ENCODE measurements at regions of chr16 and their contacts with region 1.

Region 1: DNA sequence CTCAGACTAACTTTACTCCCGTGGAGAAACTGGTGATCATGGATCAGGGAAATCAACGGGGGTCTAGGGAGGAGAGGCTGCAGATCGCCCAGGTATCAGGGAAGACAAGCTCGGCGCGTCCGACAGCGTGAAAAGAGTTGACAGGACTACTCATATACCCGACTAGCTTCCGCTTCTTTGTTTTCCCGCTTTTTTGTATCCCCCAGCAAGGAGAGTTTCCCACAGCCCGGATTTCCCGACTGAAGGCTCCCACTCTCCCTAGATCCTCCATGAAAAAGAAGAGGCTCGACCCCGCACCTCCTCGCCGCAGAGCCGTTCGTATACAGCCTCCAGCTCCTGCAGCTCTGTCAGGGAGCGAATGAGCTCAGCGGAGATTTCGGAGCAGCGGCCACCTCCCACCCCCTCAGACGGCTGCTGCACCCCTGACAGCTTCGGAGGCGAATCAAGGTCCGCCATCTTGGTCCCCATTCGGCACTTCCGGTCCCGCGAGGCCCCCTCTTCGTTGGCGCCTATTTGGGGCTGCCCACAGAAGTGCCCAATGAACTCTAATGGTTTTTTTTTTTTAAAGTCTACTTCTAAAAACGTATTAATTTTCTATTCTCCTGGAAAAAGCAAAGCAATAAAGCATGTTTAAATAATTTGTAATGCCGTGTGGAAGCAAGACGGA is at the start of gene COG4:
- DNase-seq: peak; percentile 80
- ATAC-seq: peak; percentile 85
- H3K4me3 Mint-ChIP-seq: peak within 1 kb of the TSS; percentile 99
- H3K27ac Mint-ChIP-seq: peak within 1 kb of the TSS; percentile 99
- H3K4me1 Mint-ChIP-seq: peaks cover 53% of the 10 kb centered on the region
- H3K27me3 Mint-ChIP-seq: no peaks in the 10 kb centered on the region
- CTCF ChIP-seq: no peak
- total RNA-seq, gene COG4: 39.8 and 42.5 TPM in 2 replicates

Region 2: GRCh38 chr16:70251629-70252354 is 271.4 kb before region 1 on chr16 and contains the start of gene EXOSC6:
- CTCF ChIA-PET with region 1: no interaction called
- POLR2A ChIA-PET with region 1: interaction called, 5 read pairs
- intact Hi-C with region 1: loop called (anchors 1 kb)
- DNase-seq: peak; percentile 87
- ATAC-seq: peak; percentile 96
- H3K4me3 Mint-ChIP-seq: peak within 1 kb of the TSS; percentile 89
- H3K27ac Mint-ChIP-seq: peak within 1 kb of the TSS; percentile 94
- H3K4me1 Mint-ChIP-seq: peaks cover 24% of the 10 kb centered on the region
- H3K27me3 Mint-ChIP-seq: no peaks in the 10 kb centered on the region
- CTCF ChIP-seq: peak; percentile 88
- total RNA-seq, gene EXOSC6: 30.5 and 32.0 TPM in 2 replicates

Region 3: DNA sequence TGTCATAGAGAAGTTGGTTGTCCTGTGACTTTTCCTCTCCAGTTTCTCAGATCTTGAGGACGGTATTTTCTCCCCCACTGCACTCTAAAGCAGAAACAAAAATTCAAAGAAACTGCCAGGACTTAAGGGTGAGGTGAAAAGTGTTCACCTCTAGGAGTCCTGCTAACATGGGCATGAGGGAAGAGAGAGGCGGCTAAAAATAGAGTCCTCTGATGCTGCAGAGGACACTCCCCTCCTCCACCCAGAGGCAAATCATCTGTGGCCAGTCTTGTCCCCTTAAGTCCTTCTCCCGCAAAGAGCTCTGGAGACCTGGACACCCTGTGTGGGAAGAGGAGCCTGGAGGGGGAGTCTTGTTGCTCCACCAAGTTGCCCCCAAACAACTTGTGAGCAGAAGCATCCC is 181.2 kb before region 1 on chr16:
- CTCF ChIA-PET with region 1: no interaction called
- POLR2A ChIA-PET with region 1: interaction called, 14 read pairs
- intact Hi-C with region 1: loop called (anchors 1 kb)
- DNase-seq: no peak
- ATAC-seq: no peak
- H3K4me3 Mint-ChIP-seq: no peak overlapping the region
- H3K27ac Mint-ChIP-seq: no peak overlapping the region
- H3K4me1 Mint-ChIP-seq: peaks cover 9% of the 10 kb centered on the region
- H3K27me3 Mint-ChIP-seq: no peaks in the 10 kb centered on the region
- CTCF ChIP-seq: no peak

Region 4: GRCh38 chr16:70395345-70395901 is 127.8 kb before region 1 on chr16:
- CTCF ChIA-PET with region 1: no interaction called
- POLR2A ChIA-PET with region 1: interaction called, 3 read pairs
- intact Hi-C with region 1: loop called (anchors 1 kb)
- DNase-seq: peak; percentile 66
- ATAC-seq: peak; percentile 89
- H3K4me3 Mint-ChIP-seq: no peak overlapping the region
- H3K27ac Mint-ChIP-seq: no peak overlapping the region
- H3K4me1 Mint-ChIP-seq: peaks cover 5% of the 10 kb centered on the region
- H3K27me3 Mint-ChIP-seq: no peaks in the 10 kb centered on the region
- CTCF ChIP-seq: no peak

Region 5: DNA sequence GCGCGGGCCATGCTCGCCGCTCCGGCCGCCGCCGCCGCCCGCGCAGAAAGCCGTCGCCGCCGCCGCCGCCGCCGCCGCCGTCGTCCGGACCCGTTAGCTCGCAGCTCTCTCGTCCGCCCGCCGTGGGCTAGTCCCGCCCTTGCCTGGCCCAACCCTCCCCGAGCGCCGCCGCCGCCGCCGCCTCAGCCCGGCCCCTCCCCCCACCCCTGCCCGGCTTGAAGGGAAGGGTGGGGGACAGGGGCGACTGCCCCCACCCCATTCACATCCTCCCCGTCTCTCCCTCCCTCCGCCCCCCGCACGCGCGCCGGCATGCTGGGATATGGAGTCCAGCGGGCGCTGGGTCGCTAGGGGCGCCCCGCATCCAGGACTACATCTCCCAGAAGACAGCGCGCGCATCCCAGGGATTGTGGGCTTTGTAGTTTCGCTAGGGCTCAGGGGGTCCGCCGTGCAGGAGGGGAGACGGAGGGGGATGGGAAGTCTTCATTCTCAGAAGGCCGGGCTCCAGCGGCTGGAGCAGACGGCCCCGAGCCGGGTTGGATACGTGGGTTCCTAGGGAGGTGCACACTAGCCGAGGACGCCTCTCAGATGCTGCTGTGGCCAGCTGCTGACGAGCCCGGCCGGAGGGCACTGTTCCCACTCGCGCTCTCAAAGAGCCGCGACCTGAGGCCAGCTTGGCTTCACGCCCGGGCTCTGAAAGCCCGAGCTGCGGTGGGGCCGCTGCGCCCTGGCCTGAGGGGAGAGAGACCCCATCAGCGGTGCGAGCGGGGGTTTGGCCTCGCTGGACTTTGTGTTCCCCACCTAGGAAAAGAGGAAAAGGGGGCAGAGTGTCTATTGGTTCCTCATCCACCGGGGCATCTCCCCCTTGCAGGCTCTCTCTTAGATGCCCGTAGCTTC is 84.0 kb before region 1 on chr16 and contains the start of gene ST3GAL2:
- CTCF ChIA-PET with region 1: no interaction called
- POLR2A ChIA-PET with region 1: interaction called, 5 read pairs
- intact Hi-C with region 1: loop called (anchors 1 kb)
- DNase-seq: peak; percentile 90
- ATAC-seq: peak; percentile 96
- H3K4me3 Mint-ChIP-seq: peak within 1 kb of the TSS; percentile 96
- H3K27ac Mint-ChIP-seq: peak within 1 kb of the TSS; percentile 86
- H3K4me1 Mint-ChIP-seq: peaks cover 39% of the 10 kb centered on the region
- H3K27me3 Mint-ChIP-seq: no peaks in the 10 kb centered on the region
- CTCF ChIP-seq: no peak
- total RNA-seq, gene ST3GAL2: 51.5 and 57.4 TPM in 2 replicates

Region 6: GRCh38 chr16:71288890-71289733 is 765.9 kb after region 1 on chr16 and contains the start of gene CMTR2:
- CTCF ChIA-PET with region 1: no interaction called
- POLR2A ChIA-PET with region 1: no interaction called
- intact Hi-C with region 1: loop called (anchors 5 kb)
- DNase-seq: peak; percentile 90
- ATAC-seq: peak; percentile 89
- H3K4me3 Mint-ChIP-seq: peak within 1 kb of the TSS; percentile 89
- H3K27ac Mint-ChIP-seq: peak within 1 kb of the TSS; percentile 94
- H3K4me1 Mint-ChIP-seq: peaks cover 29% of the 10 kb centered on the region
- H3K27me3 Mint-ChIP-seq: peaks cover 19% of the 10 kb centered on the region
- CTCF ChIP-seq: no peak
- total RNA-seq, gene CMTR2: 28.6 and 35.3 TPM in 2 replicates